Activated CD4-positive, alpha-beta T cell treated with anti-CD3 and anti-CD28 coated beads for 36 hours (primary cell): ENCODE measurements at regions of chr7 and their contacts with region 1.

Region 1: DNA sequence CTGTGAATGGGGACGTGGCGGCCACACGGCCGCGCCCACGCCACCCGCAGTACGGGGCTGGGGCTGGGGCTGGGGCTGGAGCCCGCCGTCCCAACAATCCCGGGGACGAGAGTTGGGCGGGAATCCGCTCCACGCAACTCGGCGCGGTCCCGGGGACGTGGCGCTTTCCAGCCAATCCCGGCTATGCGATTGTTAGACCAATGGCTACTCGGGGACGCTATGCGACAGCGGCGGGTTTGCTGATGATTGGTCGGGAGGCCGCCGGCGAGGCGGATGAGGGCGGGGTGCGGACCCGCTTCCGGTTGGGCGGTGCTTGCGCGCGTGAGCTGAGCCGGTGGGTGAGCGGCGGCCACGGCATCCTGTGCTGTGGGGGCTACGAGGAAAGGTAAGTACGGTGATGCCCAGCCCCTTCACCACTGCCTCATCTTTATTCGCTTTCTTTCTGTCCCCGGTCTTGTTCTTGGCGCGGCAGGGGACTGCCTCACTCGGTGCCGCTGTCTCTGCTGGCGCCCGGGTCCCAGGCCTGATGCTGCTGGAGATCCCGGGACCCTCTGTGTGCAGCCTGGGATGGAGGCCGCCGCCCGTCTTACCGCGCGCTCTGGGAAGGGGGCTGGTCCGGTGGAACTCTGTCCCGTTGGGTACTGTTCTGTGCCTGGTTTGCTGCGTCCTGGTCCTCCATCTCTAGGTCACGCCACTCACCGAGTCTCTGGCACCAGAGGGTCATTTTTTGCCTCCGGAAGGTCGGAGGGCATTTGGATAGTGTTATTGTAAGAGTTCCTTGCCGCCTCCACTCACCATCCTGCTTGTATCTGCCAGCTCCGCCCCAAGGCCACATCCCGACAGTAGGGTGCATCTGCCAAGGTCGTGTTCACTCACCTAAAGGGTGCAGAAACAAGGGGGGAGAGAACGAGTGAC is at the start of gene CALU:
- DNase-seq: peak; percentile 97
- ATAC-seq: peak; percentile 98
- H3K4me3 Mint-ChIP-seq: peak within 1 kb of the TSS; percentile 99
- H3K27ac Mint-ChIP-seq: peak within 1 kb of the TSS; percentile 93
- H3K4me1 Mint-ChIP-seq: peaks cover 38% of the 10 kb centered on the region
- H3K27me3 Mint-ChIP-seq: peaks cover 3% of the 10 kb centered on the region
- total RNA-seq, gene CALU: 32.9 to 33.8 TPM

Region 2: GRCh38 chr7:128409596-128410160 is 329.6 kb before region 1 on chr7 and contains the start of gene IMPDH1:
- CTCF ChIA-PET with region 1: no interaction called
- POLR2A ChIA-PET with region 1: no interaction called
- intact Hi-C with region 1: loop called in 1 of 2 experiments (anchors 1 kb)
- DNase-seq: peak; percentile 92
- ATAC-seq: peak; percentile 85
- H3K4me3 Mint-ChIP-seq: peak within 1 kb of the TSS; percentile 78
- H3K27ac Mint-ChIP-seq: peak within 1 kb of the TSS; percentile 78
- H3K4me1 Mint-ChIP-seq: peaks cover 27% of the 10 kb centered on the region
- H3K27me3 Mint-ChIP-seq: no peaks in the 10 kb centered on the region
- total RNA-seq, gene IMPDH1: 59.0 to 60.7 TPM

Region 3: DNA sequence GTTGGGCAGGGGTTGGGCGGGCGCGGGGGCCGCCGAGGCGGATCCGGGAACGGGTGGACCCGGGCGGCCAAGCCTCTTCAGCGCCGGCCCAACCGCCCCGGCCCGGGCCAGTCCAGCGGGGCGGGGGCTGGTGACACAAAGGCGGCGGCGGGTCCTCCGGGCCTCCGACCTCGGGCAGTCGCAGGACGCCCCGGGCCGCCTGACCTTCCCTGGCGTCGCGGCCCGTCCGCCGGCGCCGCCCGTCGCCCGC is 208.5 kb before region 1 on chr7:
- CTCF ChIA-PET with region 1: no interaction called
- POLR2A ChIA-PET with region 1: no interaction called
- intact Hi-C with region 1: loop called in 1 of 2 experiments (anchors 2 kb)
- DNase-seq: no peak
- ATAC-seq: no peak
- H3K4me3 Mint-ChIP-seq: peak overlapping the region; percentile 95
- H3K27ac Mint-ChIP-seq: no peak overlapping the region
- H3K4me1 Mint-ChIP-seq: peaks cover 27% of the 10 kb centered on the region
- H3K27me3 Mint-ChIP-seq: no peaks in the 10 kb centered on the region

Region 4: DNA sequence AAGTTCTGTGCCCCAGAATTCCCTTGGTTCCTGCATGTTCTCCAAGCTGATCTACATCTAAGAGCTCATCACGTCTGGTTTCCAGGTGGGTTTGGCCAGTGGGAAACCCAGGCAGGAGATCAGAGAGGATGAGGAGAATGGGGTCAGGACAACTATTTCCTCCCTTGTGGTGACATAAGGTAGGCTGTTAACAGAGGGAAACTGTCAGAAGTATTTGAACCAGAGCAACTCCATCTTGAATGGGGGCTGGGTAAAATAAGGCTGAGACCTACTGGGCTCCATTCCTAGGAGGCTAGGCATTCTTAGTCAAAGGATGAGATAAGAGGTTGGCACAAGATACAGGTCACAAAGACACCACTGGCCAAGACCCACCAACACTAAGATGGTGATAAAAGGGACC is 48.1 kb before region 1 on chr7:
- CTCF ChIA-PET with region 1: no interaction called
- POLR2A ChIA-PET with region 1: no interaction called
- intact Hi-C with region 1: no loop called
- DNase-seq: no peak
- ATAC-seq: no peak
- H3K4me3 Mint-ChIP-seq: no peak overlapping the region
- H3K27ac Mint-ChIP-seq: no peak overlapping the region
- H3K4me1 Mint-ChIP-seq: no peaks in the 10 kb centered on the region
- H3K27me3 Mint-ChIP-seq: peaks cover 10% of the 10 kb centered on the region

Region 5: DNA sequence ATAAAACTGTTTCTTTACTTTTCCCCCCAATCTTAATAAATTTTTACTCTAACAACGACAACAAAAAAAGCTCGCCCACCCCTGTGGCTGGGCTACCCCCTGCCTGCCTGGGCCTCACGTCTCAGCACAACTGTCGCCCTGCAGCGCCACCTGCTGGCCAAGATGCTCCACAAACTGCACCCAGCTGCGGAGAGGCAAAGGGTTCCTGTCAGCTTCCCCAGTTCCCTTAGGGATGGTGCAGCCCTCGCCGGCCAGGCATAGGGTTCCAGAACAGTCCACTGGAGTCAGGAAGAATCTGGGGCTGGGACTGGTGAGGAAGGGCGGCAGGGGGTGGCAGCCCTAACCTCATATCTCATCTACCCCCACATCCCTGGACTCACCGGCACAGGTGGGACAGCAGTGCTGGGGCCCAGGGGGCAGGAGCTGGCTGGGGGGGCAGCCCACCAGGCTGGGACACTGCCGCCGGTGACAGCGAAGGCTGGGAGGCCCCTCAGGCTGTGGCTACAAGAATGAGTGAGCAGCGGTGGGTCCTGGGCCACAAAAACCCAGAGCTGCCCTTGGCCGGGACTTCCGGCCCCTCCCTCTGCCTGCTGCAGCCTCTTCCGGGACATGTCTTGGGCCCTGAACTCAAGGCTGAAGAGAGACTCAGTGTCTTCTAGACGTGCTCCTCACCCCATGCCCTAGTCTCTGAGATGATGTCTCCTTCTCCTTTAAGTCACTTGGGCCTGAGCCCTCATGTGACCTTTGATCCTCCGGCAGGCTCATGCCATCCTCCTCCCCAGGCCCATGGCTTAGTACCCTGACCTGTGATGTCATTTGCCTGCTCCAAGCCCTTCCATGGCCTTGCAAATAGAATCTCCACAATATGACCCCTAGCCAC is 144.6 kb after region 1 on chr7:
- CTCF ChIA-PET with region 1: interaction called, 12 read pairs
- POLR2A ChIA-PET with region 1: no interaction called
- intact Hi-C with region 1: no loop called
- DNase-seq: peak; percentile 92
- ATAC-seq: peak; percentile 82
- H3K4me3 Mint-ChIP-seq: no peak overlapping the region
- H3K27ac Mint-ChIP-seq: no peak overlapping the region
- H3K4me1 Mint-ChIP-seq: no peaks in the 10 kb centered on the region
- H3K27me3 Mint-ChIP-seq: peaks cover 2% of the 10 kb centered on the region

Region 6: DNA sequence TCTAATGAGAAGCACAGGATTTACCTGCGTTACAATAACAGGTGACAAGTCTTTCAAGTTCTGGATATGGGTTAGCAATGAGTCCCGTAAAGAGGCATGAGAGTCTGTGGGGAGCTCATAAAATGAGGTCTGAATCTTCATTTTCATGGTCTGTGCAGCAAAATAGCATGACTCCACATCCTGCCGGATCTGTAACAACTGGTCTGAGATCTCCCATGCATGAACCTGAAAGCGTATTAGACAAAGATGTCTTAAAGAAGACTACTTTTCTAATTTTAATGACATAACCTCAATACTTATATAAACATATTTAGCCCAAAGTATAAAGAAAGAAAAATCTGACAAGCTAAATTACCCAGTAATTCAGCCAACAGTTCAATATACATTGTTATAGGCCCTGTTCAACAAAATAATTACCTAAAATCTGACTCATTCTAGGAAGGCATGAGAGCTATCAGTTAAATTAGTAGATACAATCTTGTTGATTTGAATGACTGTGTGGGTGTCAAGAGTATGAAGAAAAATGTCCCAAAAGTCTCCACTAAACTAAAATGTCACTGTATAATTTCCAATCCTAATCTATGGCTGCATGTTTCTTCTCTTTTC is 278.7 kb after region 1 on chr7:
- CTCF ChIA-PET with region 1: no interaction called
- POLR2A ChIA-PET with region 1: no interaction called
- intact Hi-C with region 1: no loop called
- DNase-seq: no peak
- ATAC-seq: no peak
- H3K4me3 Mint-ChIP-seq: no peak overlapping the region
- H3K27ac Mint-ChIP-seq: no peak overlapping the region
- H3K4me1 Mint-ChIP-seq: peaks cover 34% of the 10 kb centered on the region
- H3K27me3 Mint-ChIP-seq: no peaks in the 10 kb centered on the region

Region 7: DNA sequence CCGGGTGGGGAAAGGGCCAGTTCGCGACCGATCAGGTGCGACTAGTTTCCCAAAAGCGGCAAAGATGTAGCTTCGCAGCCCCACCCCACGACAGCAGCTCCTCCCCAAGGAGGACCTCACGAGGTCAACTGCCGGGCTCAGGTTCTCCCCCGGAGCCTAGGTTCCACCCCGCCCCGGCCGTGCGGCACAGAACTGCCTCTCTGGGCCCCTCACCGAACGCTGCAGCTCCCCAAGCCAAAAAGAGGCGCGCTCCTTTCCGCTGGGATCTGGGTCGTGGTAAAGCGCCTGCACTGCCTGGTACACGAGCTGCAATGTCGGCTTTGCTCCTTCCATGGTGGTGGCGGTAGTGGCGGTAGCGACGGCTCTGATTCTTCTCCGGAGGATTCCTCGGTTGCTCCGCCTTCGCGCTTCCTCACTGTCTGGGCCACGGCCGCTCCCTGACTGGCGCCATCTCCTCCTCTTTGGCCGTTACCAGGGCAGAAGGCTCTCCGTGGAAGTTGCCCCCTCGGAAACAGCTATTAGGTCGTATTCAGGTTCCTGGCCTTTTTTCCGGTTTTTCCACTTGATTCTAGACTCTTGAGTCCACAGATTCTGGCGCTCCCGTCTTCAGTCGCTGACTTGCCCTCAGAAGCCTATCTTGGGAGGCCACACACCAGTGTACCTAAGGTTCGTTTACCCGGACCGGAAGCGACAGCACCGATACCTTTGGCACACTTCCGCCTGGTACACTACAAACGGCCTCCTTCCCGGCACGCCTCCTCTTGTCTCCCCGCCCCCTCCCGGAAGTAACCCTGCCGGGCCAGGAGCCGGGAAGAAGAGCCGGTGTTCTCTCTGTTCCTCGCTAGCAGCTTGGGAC is 315.4 kb after region 1 on chr7 and contains the start of gene TNPO3:
- CTCF ChIA-PET with region 1: no interaction called
- POLR2A ChIA-PET with region 1: no interaction called
- intact Hi-C with region 1: loop called in 1 of 2 experiments (anchors 1 kb)
- DNase-seq: peak; percentile 94
- ATAC-seq: peak; percentile 91
- H3K4me3 Mint-ChIP-seq: peak within 1 kb of the TSS; percentile 89
- H3K27ac Mint-ChIP-seq: peak within 1 kb of the TSS; percentile 99
- H3K4me1 Mint-ChIP-seq: peaks cover 28% of the 10 kb centered on the region
- H3K27me3 Mint-ChIP-seq: peaks cover 3% of the 10 kb centered on the region
- total RNA-seq, gene TNPO3: 57.7 to 60.5 TPM